GM10248 (cell line): ENCODE measurements at regions of chr6 and their contacts with region 1.

Region 1: GRCh38 chr6:7933794-7934193 is 23.2 kb upstream of the TXNDC5 start:
- DNase-seq: peak; percentile 60
- CTCF ChIP-seq: no peak

Region 2: DNA sequence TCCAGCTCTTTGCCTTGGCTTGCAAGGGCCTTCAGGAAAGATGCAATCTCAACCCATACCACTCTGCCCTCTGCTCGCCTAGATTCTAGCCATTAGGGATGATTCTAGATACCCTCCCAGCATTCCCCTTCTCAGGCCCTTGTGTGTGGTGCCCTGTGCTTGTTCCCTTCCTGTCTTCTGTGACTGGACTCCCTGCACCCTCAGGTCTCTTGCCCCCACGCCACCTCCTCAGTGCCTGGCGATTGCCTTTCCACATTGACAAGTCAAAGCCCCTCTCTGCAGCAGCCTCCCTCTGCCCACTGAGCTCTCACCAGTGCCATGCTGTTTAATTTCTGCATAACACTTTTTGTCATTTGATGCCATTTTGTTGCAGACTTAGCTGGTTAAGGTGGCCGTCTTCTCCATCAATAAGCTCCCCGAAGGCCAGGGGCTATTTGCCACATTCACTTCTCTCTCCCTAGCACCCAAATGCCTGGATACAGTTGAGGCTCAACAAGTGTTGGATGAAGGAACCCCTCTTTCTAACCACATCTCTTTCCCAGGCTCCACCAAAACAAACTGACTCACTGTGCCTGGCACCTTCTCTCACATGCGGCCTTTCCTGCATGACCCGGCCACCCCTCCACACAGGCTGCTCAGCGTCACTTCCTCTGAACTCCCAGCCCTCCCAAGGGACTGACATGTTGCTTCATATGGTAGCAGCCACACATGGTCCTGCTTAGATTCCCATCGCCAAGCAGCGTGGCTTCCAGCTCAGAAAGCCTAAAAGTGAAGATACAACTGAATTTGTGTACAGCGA is 18.6 kb before region 1 on chr6:
- CTCF ChIA-PET with region 1: interaction called, 17 read pairs
- POLR2A ChIA-PET with region 1: no interaction called
- DNase-seq: no peak
- CTCF ChIP-seq: no peak